Ascending aorta (tissue), 2 donors: ENCODE measurements at regions of chr4 and their contacts with region 1.

Region 1: GRCh38 chr4:2963175-2963965 is at the starts of genes GRK4 and NOP14:
- DNase-seq: peak; percentile 89 to 99
- H3K4me3 ChIP-seq: peak within 1 kb of the TSS; percentile 88 to 94
- H3K27ac ChIP-seq: peak within 1 kb of the TSS; percentile 78 to 83
- H3K4me1 ChIP-seq: peaks cover 3 to 12% of the 10 kb centered on the region in 2 donors
- H3K27me3 ChIP-seq: no peaks in the 10 kb centered on the region
- CTCF ChIP-seq: peak in 2 of 3 experiments; percentile 36 to 51
- total RNA-seq, gene GRK4: 1.9 TPM
- total RNA-seq, gene NOP14: 12.3 TPM

Region 2: GRCh38 chr4:2241410-2242353 is 721.7 kb before region 1 on chr4 and contains the starts of genes HAUS3 and POLN:
- intact Hi-C with region 1: loop called (anchors 5 kb)
- DNase-seq: peak; percentile 90 to 99
- H3K4me3 ChIP-seq: peak within 1 kb of the TSS; percentile 65 to 97
- H3K27ac ChIP-seq: peak within 1 kb of the TSS; percentile 60 to 69
- H3K4me1 ChIP-seq: peaks cover 6 to 37% of the 10 kb centered on the region in 2 donors
- H3K27me3 ChIP-seq: no peaks in the 10 kb centered on the region
- CTCF ChIP-seq: no peak
- total RNA-seq, gene HAUS3: 9.0 TPM
- total RNA-seq, gene POLN: 0.21 TPM

Region 3: DNA sequence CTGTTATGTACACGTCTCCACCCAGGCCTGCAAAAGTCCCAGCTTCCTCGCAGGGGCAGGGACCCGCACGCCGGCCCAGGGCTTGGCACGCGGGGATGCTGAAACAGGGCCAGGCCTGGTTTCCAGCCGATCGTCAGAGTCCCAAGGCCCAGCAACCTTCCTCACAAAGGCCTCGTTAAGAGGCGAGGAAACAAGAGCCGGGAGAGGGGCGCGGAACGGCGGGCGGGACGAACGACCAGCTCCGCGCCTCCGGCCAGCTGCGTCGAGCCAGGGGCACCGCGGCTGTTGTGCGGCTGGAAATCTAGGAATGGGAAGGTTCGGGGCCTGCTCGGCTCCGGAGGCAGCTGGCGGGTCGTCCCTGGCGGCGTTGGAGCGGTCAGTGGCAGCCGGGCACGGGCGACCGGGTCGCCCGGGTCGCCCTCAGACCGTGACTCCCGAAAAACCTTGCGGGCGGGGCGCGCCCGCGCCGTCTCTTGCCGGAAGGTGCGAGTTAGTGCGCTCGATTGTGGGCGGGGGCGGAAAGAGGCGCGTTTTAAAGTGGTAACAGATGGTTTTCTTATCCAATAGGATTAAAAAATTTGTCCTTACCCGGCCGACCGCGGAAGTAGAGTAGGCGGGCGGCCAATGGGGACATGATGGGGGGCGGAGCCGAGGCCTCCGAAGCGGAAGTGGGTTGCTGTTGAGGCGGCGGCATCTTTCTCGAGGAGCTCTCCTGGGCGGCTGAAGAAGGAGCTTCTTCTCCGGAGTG is 494.8 kb before region 1 on chr4 and contains the start of gene RNF4:
- intact Hi-C with region 1: loop called (anchors 10 kb)
- DNase-seq: peak; percentile 86 to 98
- H3K4me3 ChIP-seq: peak within 1 kb of the TSS; percentile 84 to 95
- H3K27ac ChIP-seq: peak within 1 kb of the TSS; percentile 81 to 91
- H3K4me1 ChIP-seq: peaks cover 3 to 18% of the 10 kb centered on the region in 2 donors
- H3K27me3 ChIP-seq: no peaks in the 10 kb centered on the region
- CTCF ChIP-seq: no peak
- total RNA-seq, gene RNF4: 19.3 TPM

Region 4: GRCh38 chr4:2574863-2575262 is 388.5 kb before region 1 on chr4:
- intact Hi-C with region 1: no loop called
- DNase-seq: no peak
- H3K4me3 ChIP-seq: no peak overlapping the region
- H3K27ac ChIP-seq: no peak overlapping the region
- H3K4me1 ChIP-seq: peaks cover 0 to 13% of the 10 kb centered on the region in 2 donors
- H3K27me3 ChIP-seq: no peaks in the 10 kb centered on the region
- CTCF ChIP-seq: no peak

Region 5: GRCh38 chr4:2755837-2756694 is 207.3 kb before region 1 on chr4 and contains the start of gene TNIP2:
- intact Hi-C with region 1: loop called (anchors 1 kb)
- DNase-seq: peak in 1 of 2 donors; percentile 92
- H3K4me3 ChIP-seq: peak within 1 kb of the TSS; percentile 90 to 95
- H3K27ac ChIP-seq: peak within 1 kb of the TSS; percentile 82 to 87
- H3K4me1 ChIP-seq: peaks cover 4 to 10% of the 10 kb centered on the region in 2 donors
- H3K27me3 ChIP-seq: no peaks in the 10 kb centered on the region
- CTCF ChIP-seq: peak; percentile 11 to 59 (median 28)
- total RNA-seq, gene TNIP2: 65.6 TPM

Region 6: DNA sequence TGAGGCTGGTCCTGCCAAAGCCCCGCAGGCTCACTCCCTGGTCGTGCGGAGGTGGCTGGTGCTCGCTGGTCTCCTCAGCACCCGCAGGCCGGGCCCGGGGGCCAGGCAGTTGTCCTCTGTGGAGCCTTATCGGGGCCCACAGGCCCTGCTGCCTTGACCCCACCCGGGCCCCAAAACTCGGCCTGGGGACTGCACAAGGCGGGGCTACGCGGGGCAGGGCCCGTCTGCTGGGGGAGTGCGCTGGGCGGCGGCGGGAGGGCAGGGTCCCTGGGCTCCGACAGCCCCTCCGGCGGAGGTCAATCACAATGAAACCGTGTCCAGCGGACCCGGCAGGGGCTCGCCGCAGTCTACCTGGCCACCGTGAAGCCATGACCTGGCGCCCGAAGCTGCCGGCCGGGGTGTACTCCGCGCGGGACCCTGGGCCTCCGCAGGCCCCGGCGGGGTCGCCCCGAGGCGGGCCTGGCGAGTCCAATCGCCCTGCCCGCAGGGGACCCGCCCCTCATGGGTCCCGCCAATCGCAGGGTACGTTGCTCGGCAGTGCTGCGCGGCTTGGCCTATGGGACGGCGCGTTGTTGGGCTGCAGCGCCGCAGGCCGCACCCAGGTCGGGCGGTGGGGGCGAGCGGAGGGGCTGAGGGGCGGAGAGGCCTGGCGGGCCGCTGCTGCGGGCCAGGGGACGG is 120.0 kb before region 1 on chr4 and contains the start of gene ADD1:
- intact Hi-C with region 1: loop called (anchors 1 kb)
- DNase-seq: peak; percentile 67 to 96
- H3K4me3 ChIP-seq: peak within 1 kb of the TSS; percentile 87 to 90
- H3K27ac ChIP-seq: peak within 1 kb of the TSS; percentile 93 to 96
- H3K4me1 ChIP-seq: peaks cover 3 to 31% of the 10 kb centered on the region in 2 donors
- H3K27me3 ChIP-seq: no peaks in the 10 kb centered on the region
- CTCF ChIP-seq: no peak
- total RNA-seq, gene ADD1: 261 TPM

Region 7: GRCh38 chr4:3037957-3038461 is 74.6 kb after region 1 on chr4:
- intact Hi-C with region 1: loop called (anchors 1 kb)
- DNase-seq: peak in 1 of 2 donors; percentile 69
- H3K4me3 ChIP-seq: peak overlapping the region; percentile 36 to 46
- H3K27ac ChIP-seq: no peak overlapping the region
- H3K4me1 ChIP-seq: peaks cover 3 to 9% of the 10 kb centered on the region in 2 donors
- H3K27me3 ChIP-seq: no peaks in the 10 kb centered on the region
- CTCF ChIP-seq: no peak

Region 8: DNA sequence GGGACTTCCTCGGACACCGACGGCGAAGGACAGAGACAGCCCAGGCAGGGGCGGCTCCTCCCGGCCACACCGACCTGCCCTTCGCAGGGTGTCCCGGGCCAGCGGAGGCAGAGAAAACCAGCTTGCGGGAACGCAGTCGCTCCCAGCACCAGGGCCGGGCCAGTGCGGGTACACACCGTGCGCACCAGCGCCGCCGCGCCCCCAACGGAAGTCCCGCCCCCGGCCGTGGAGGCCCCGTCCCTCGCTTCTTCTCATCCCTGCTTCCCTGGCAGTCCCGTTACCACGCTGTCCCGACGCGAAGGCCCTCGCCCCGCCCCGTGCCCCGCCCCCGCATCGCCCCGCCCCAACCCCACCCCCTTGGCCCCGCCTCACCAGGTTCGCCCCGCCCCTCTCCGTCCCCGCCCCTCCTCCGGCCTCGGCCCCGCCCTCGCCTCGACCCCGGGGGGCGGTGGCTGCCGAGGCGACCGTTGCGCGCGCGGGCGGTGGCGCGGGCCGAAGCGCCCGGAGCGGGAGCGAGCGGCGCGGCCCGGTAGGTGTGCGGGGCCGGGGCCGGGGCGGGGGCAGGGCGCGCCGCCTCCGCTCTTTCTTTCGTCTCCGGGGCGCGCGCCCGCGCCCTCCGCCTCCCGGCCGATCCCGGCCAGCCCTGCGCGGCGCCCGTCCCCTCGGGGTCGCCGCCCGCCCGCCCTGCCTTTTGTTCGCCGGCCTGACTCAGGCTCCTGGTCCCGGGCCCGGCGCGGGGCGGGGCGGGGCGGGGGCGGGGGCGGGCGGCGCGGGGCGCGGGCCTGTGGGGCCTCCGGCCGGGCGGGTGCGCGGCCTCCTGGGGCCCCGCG is 329.4 kb after region 1 on chr4 and contains the start of gene RGS12:
- intact Hi-C with region 1: loop called (anchors 2 kb)
- DNase-seq: peak; percentile 86 to 96
- H3K4me3 ChIP-seq: peak within 1 kb of the TSS; percentile 76 to 96
- H3K27ac ChIP-seq: peak within 1 kb of the TSS; percentile 90 to 98
- H3K4me1 ChIP-seq: peaks cover 5 to 11% of the 10 kb centered on the region in 2 donors
- H3K27me3 ChIP-seq: peaks cover 6% of the 10 kb centered on the region
- CTCF ChIP-seq: no peak
- total RNA-seq, gene RGS12: 26.3 TPM

Region 9: GRCh38 chr4:4248029-4248884 is 1284.9 kb after region 1 on chr4 and contains the start of gene TMEM128:
- intact Hi-C with region 1: no loop called
- DNase-seq: peak; percentile 53 to 97
- H3K4me3 ChIP-seq: peak within 1 kb of the TSS; percentile 69 to 86
- H3K27ac ChIP-seq: peak within 1 kb of the TSS; percentile 89 to 96
- H3K4me1 ChIP-seq: peaks cover 2 to 11% of the 10 kb centered on the region in 2 donors
- H3K27me3 ChIP-seq: no peaks in the 10 kb centered on the region
- CTCF ChIP-seq: peak in 2 of 3 experiments; percentile 15 to 17
- total RNA-seq, gene TMEM128: 0.64 TPM